Activated CD8-positive, alpha-beta T cell treated with anti-CD3 and anti-CD28 coated beads, Interleukin-2, amount 10 ng/mL, durations not matched to agents 7 days and 5 days (primary cell): ENCODE measurements at regions of chr3 and their contacts with region 1.

Region 1: GRCh38 chr3:58414538-58415197 is 19.0 kb downstream of the PDHB start:
- DNase-seq: peak; percentile 69
- ATAC-seq: peak; percentile 78
- H3K4me3 Mint-ChIP-seq: no peak overlapping the region
- H3K27ac Mint-ChIP-seq: no peak overlapping the region
- H3K4me1 Mint-ChIP-seq: peaks cover 6% of the 10 kb centered on the region
- H3K27me3 Mint-ChIP-seq: no peaks in the 10 kb centered on the region

Region 2: DNA sequence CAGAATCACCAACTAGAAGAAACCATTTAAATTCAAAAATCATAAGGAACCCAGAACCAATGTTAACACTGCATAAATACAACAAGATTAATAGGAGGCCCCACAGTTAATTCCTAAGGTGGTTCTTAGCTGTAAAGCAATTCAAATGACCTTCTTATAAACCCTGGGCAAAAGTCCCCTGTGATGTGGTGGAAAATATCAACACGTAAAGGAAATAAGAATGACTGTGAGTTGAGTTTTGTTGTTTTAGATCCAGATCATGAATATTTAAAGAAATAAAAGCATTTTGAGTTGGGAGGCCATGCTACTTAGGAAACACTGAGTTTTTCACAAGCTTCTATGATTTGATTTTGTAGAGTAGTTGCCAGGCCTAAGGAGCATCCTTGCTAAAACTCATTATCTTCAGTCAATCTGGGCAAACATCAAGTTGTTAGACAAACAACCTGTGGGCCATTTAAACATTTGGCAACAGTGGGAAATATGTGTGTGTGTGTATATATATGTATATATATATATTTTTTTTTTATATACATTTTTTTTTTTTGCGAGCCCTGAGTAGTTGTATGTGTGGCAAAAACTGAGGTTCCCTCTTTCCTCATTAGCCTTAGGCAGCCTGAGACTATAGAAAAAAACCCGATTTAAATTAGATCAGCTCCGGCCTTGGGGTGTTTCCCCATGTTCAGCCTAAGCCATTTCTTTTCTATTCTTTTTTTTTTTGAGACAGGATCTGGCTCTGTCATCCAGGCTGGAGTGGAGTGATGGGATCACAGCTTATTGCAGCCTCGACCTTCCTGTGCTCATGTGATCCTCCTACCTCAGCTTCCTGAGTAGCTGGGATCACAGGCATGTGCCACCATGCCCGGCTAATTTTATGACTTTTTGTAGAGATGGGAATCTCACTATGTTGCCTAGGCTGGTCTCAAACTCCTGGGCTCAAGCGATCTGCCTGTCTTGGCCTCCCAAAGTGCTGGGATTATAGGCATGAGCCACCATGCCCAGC is 90.0 kb before region 1 on chr3:
- CTCF ChIA-PET with region 1: interaction called, 37 read pairs
- POLR2A ChIA-PET with region 1: no interaction called
- DNase-seq: no peak
- ATAC-seq: peak; percentile 43
- H3K4me3 Mint-ChIP-seq: no peak overlapping the region
- H3K27ac Mint-ChIP-seq: peak overlapping the region; percentile 61
- H3K4me1 Mint-ChIP-seq: peaks cover 19% of the 10 kb centered on the region
- H3K27me3 Mint-ChIP-seq: no peaks in the 10 kb centered on the region

Region 3: GRCh38 chr3:58332575-58333188 is 82.0 kb before region 1 on chr3 and contains the start of gene PXK:
- CTCF ChIA-PET with region 1: interaction called, 22 read pairs
- POLR2A ChIA-PET with region 1: no interaction called
- DNase-seq: peak; percentile 84
- ATAC-seq: peak; percentile 94
- H3K4me3 Mint-ChIP-seq: peak within 1 kb of the TSS; percentile 100
- H3K27ac Mint-ChIP-seq: peak within 1 kb of the TSS; percentile 94
- H3K4me1 Mint-ChIP-seq: peaks cover 41% of the 10 kb centered on the region
- H3K27me3 Mint-ChIP-seq: no peaks in the 10 kb centered on the region
- total RNA-seq, gene PXK: 31.5 to 33.4 TPM

Region 4: GRCh38 chr3:58349792-58350626 is 64.7 kb before region 1 on chr3:
- CTCF ChIA-PET with region 1: interaction called, 21 read pairs
- POLR2A ChIA-PET with region 1: no interaction called
- DNase-seq: peak; percentile 45
- ATAC-seq: no peak
- H3K4me3 Mint-ChIP-seq: peak overlapping the region; percentile 10
- H3K27ac Mint-ChIP-seq: peak overlapping the region; percentile 83
- H3K4me1 Mint-ChIP-seq: peaks cover 81% of the 10 kb centered on the region
- H3K27me3 Mint-ChIP-seq: no peaks in the 10 kb centered on the region

Region 5: DNA sequence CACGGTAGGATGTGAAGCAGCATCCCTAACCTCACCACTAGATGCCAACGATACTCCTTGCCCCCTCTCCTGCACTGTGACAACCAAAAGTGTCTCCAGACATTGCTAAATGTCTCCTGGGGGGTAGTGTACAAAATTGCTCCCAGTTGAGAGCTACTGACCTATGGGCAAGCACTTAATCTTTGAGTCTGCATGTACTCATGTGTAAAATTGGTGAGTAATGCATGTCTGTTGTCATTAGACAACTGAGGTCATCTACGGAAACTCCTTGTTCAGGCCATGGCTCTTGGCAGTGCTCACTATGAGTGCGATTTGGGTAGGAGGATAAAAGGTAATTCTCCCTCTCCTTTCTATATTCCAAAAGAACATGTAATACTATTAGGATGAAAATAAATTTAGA is 10.3 kb before region 1 on chr3:
- CTCF ChIA-PET with region 1: interaction called, 10 read pairs
- POLR2A ChIA-PET with region 1: no interaction called
- DNase-seq: no peak
- ATAC-seq: no peak
- H3K4me3 Mint-ChIP-seq: no peak overlapping the region
- H3K27ac Mint-ChIP-seq: no peak overlapping the region
- H3K4me1 Mint-ChIP-seq: peaks cover 7% of the 10 kb centered on the region
- H3K27me3 Mint-ChIP-seq: no peaks in the 10 kb centered on the region

Region 6: DNA sequence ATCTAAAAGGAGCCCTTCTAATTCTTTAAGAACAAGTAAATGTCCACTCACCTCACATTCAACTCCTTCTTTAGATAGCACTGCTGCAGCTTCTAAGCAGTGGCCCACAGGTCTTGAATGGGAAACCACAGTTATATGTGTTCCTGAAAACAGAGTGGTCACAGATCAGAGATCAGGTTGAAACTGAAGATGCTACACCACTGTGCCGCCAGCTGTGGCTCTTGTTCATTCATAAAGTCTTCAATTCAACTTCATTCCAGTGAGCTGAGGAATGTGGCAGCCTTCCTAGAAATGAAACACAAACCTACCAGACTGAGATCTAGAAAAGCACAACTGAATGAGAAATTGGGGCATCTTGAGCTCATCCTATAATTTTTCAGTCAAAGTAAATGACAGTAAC is 15.0 kb after region 1 on chr3:
- CTCF ChIA-PET with region 1: interaction called, 16 read pairs
- POLR2A ChIA-PET with region 1: no interaction called
- DNase-seq: no peak
- ATAC-seq: no peak
- H3K4me3 Mint-ChIP-seq: no peak overlapping the region
- H3K27ac Mint-ChIP-seq: no peak overlapping the region
- H3K4me1 Mint-ChIP-seq: peaks cover 18% of the 10 kb centered on the region
- H3K27me3 Mint-ChIP-seq: no peaks in the 10 kb centered on the region

Region 7: GRCh38 chr3:58478781-58479180 is 64.1 kb after region 1 on chr3:
- CTCF ChIA-PET with region 1: no interaction called
- POLR2A ChIA-PET with region 1: no interaction called
- DNase-seq: no peak
- ATAC-seq: no peak
- H3K4me3 Mint-ChIP-seq: no peak overlapping the region
- H3K27ac Mint-ChIP-seq: no peak overlapping the region
- H3K4me1 Mint-ChIP-seq: peaks cover 7% of the 10 kb centered on the region
- H3K27me3 Mint-ChIP-seq: peaks cover 32% of the 10 kb centered on the region

Region 8: GRCh38 chr3:58585005-58585786 is 170.5 kb after region 1 on chr3:
- CTCF ChIA-PET with region 1: no interaction called
- POLR2A ChIA-PET with region 1: no interaction called
- DNase-seq: peak; percentile 62
- ATAC-seq: peak; percentile 95
- H3K4me3 Mint-ChIP-seq: peak overlapping the region; percentile 79
- H3K27ac Mint-ChIP-seq: no peak overlapping the region
- H3K4me1 Mint-ChIP-seq: peaks cover 16% of the 10 kb centered on the region
- H3K27me3 Mint-ChIP-seq: peaks cover 39% of the 10 kb centered on the region